ENCODE measurements at regions of chr9 and their contacts with region 1.

Region 1: GRCh38 chr9:98796364-98797101 is at the start of gene ANKS6:
- DNase-seq: peak; percentile 63 to 91 (median 85)
- ATAC-seq: peak; percentile 92
- H3K4me3 ChIP-seq: peak within 1 kb of the TSS; percentile 77 to 95
- H3K4me3 Mint-ChIP-seq: peak within 1 kb of the TSS; percentile 88
- H3K27ac ChIP-seq: peak within 1 kb of the TSS; percentile 61 to 66
- H3K27ac Mint-ChIP-seq: peak within 1 kb of the TSS; percentile 85
- H3K4me1 ChIP-seq: peaks cover 15% of the 10 kb centered on the region
- H3K4me1 Mint-ChIP-seq: peaks cover 32% of the 10 kb centered on the region
- H3K27me3 ChIP-seq: no peaks in the 10 kb centered on the region
- H3K27me3 Mint-ChIP-seq: no peaks in the 10 kb centered on the region
- CTCF ChIP-seq: peak; percentile 28
- total RNA-seq, gene ANKS6: 10.6 to 12.7 TPM

Region 2: GRCh38 chr9:97696803-97697601 is 1099.5 kb before region 1 on chr9 and contains the start of gene XPA:
- CTCF ChIA-PET with region 1: no interaction called
- POLR2A ChIA-PET with region 1: no interaction called
- intact Hi-C with region 1: loop called in 1 of 2 experiments (anchors 10 kb)
- DNase-seq: peak; percentile 90 to 99 (median 97)
- ATAC-seq: peak; percentile 94
- H3K4me3 ChIP-seq: peak within 1 kb of the TSS; percentile 68 to 79
- H3K4me3 Mint-ChIP-seq: peak within 1 kb of the TSS; percentile 83
- H3K27ac ChIP-seq: peak within 1 kb of the TSS; percentile 60 to 79
- H3K27ac Mint-ChIP-seq: peak within 1 kb of the TSS; percentile 92
- H3K4me1 ChIP-seq: peaks cover 39% of the 10 kb centered on the region
- H3K4me1 Mint-ChIP-seq: peaks cover 53% of the 10 kb centered on the region
- H3K27me3 ChIP-seq: no peaks in the 10 kb centered on the region
- H3K27me3 Mint-ChIP-seq: peaks cover 4% of the 10 kb centered on the region
- CTCF ChIP-seq: no peak
- total RNA-seq, gene XPA: 21.1 to 24.9 TPM

Region 3: DNA sequence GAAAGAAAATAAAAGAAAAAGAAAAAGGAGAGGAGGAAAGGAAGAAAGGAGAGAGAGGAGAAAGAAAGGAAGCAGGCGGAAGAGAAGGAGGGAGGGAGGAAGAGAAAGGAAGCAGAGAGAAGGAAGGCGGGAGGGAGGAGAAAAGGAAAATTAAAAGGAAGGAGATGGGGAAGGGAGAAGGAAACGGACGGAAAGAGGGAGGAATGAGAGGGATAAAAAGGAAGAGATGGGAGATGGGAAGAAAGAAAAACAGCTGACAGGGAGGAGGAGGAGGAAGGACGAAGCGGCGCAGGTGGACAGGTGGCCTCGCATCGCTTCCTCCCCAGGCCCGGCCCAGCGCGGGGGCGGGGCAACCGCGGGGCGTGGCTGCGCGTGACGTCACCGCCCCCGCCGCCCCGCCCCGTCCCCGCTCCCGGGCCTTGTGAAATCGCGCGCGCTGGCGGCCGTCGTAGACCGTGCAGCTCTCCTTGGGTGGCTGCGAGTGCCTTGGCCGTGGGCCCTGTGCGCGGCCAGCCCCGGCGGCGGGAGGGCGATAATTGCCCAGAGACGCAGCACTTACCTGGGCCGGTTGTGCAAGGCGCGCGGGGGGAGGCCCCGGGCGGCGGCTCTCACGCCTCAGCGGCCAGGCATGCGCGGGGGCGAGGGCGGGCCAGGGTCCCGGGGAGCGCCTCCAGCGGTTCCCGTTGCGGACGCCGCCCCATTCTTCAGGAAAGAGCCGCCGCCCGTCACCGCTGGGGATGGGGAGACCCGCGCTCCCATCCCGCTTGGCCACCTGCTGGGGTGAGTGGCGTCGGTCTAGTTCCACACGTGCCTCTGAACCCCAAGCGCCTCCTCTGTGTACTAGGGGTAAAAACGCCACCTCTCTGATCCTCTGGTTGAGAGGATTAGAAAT is 993.1 kb before region 1 on chr9:
- CTCF ChIA-PET with region 1: no interaction called
- POLR2A ChIA-PET with region 1: no interaction called
- intact Hi-C with region 1: loop called in 1 of 2 experiments (anchors 5 kb)
- DNase-seq: peak; percentile 47 to 86 (median 77)
- ATAC-seq: peak; percentile 97
- H3K4me3 ChIP-seq: peak overlapping the region; percentile 43 to 56
- H3K4me3 Mint-ChIP-seq: peak overlapping the region; percentile 81
- H3K27ac ChIP-seq: no peak overlapping the region
- H3K27ac Mint-ChIP-seq: peak overlapping the region; percentile 42
- H3K4me1 ChIP-seq: peaks cover 7% of the 10 kb centered on the region
- H3K4me1 Mint-ChIP-seq: peaks cover 5% of the 10 kb centered on the region
- H3K27me3 ChIP-seq: peaks cover 3 to 5% of the 10 kb centered on the region in 2 experiments
- H3K27me3 Mint-ChIP-seq: peaks cover 13% of the 10 kb centered on the region
- CTCF ChIP-seq: no peak

Region 4: GRCh38 chr9:98192503-98193335 is 603.8 kb before region 1 on chr9 and contains the start of gene CORO2A:
- CTCF ChIA-PET with region 1: no interaction called
- POLR2A ChIA-PET with region 1: no interaction called
- intact Hi-C with region 1: loop called in 1 of 2 experiments (anchors 10 kb)
- DNase-seq: peak; percentile 16 to 85 (median 69)
- ATAC-seq: peak; percentile 72
- H3K4me3 ChIP-seq: peak within 1 kb of the TSS; percentile 80 to 84
- H3K4me3 Mint-ChIP-seq: peak within 1 kb of the TSS; percentile 85
- H3K27ac ChIP-seq: peak within 1 kb of the TSS; percentile 39 to 42
- H3K27ac Mint-ChIP-seq: peak within 1 kb of the TSS; percentile 69
- H3K4me1 ChIP-seq: peaks cover 32% of the 10 kb centered on the region
- H3K4me1 Mint-ChIP-seq: peaks cover 40% of the 10 kb centered on the region
- H3K27me3 ChIP-seq: no peaks in the 10 kb centered on the region
- H3K27me3 Mint-ChIP-seq: no peaks in the 10 kb centered on the region
- CTCF ChIP-seq: no peak
- total RNA-seq, gene CORO2A: 6.4 to 6.7 TPM

Region 5: GRCh38 chr9:98457726-98458370 is 338.7 kb before region 1 on chr9:
- CTCF ChIA-PET with region 1: no interaction called
- POLR2A ChIA-PET with region 1: no interaction called
- intact Hi-C with region 1: no loop called
- DNase-seq: no peak
- ATAC-seq: no peak
- H3K4me3 ChIP-seq: no peak overlapping the region
- H3K4me3 Mint-ChIP-seq: no peak overlapping the region
- H3K27ac ChIP-seq: no peak overlapping the region
- H3K27ac Mint-ChIP-seq: no peak overlapping the region
- H3K4me1 ChIP-seq: no peaks in the 10 kb centered on the region
- H3K4me1 Mint-ChIP-seq: no peaks in the 10 kb centered on the region
- H3K27me3 ChIP-seq: no peaks in the 10 kb centered on the region
- H3K27me3 Mint-ChIP-seq: peaks cover 31% of the 10 kb centered on the region
- CTCF ChIP-seq: no peak

Region 6: DNA sequence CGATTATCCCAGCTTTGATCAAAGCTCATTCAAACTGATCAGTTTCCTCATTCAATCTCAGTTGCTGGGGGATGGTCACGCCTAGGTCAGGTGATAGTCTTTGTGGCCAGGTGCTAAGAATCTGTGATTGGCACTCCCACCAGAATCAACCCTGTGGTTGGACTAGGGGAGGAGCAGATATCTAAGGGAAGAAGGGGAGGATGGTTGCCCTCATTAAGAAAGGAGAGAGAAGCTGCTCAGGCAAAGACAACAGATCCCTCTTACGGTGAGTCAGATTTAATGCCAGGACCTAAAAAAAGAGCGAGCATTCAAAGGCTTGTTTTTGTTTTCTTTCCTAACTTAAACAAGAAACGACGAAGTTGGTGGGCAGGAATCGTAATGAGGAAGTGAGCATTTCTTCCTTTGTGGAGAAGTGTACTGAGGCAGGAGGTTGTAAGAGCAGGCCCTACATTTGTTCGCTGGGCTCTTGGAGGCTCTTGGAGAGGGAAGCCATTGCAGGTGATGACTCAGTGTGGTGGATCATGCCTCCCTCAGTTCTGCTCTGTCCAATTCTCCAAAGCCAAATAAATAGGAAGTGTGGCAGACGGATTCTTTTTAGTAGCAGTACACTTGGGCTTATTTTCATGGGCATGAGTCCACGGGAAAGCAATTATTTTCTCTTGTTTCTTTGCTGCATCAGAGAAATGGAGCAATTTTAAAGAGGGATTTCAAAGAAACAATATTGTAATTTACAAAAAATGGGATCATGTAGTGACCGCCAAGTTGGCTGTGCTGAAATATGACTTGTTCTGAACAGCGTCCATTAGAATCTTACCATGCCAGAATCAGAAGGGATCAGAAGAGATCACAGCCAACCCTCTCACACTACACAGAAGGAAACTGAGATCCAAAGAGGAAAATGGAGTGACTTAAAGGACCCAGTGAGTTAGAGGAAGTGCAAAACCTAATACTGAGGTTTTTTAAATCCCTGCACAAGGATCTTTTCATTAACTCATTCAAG is 289.7 kb after region 1 on chr9:
- CTCF ChIA-PET with region 1: no interaction called
- POLR2A ChIA-PET with region 1: no interaction called
- intact Hi-C with region 1: no loop called
- DNase-seq: no peak
- ATAC-seq: no peak
- H3K4me3 ChIP-seq: no peak overlapping the region
- H3K4me3 Mint-ChIP-seq: no peak overlapping the region
- H3K27ac ChIP-seq: no peak overlapping the region
- H3K27ac Mint-ChIP-seq: no peak overlapping the region
- H3K4me1 ChIP-seq: no peaks in the 10 kb centered on the region
- H3K4me1 Mint-ChIP-seq: peaks cover 18% of the 10 kb centered on the region
- H3K27me3 ChIP-seq: no peaks in the 10 kb centered on the region
- H3K27me3 Mint-ChIP-seq: no peaks in the 10 kb centered on the region
- CTCF ChIP-seq: no peak